Tibial artery (tissue), 4 donors: ENCODE measurements at regions of chr12 and their contacts with region 1.

Region 1: GRCh38 chr12:104641862-104642261 is 185.1 kb downstream of the CHST11 start:
- DNase-seq: no peak
- H3K4me3 ChIP-seq: no peak overlapping the region
- H3K27ac ChIP-seq: no peak overlapping the region
- H3K4me1 ChIP-seq: peaks cover 0 to 11% (median 0%) of the 10 kb centered on the region in 4 donors
- H3K27me3 ChIP-seq: no peaks in the 10 kb centered on the region
- CTCF ChIP-seq: no peak

Region 2: GRCh38 chr12:104560881-104561280 is 81.0 kb before region 1 on chr12:
- intact Hi-C with region 1: loop called (anchors 5 kb)
- DNase-seq: no peak
- H3K4me3 ChIP-seq: no peak overlapping the region
- H3K27ac ChIP-seq: no peak overlapping the region
- H3K4me1 ChIP-seq: peaks cover 0 to 4% (median 0%) of the 10 kb centered on the region in 4 donors
- H3K27me3 ChIP-seq: no peaks in the 10 kb centered on the region
- CTCF ChIP-seq: no peak

Region 3: DNA sequence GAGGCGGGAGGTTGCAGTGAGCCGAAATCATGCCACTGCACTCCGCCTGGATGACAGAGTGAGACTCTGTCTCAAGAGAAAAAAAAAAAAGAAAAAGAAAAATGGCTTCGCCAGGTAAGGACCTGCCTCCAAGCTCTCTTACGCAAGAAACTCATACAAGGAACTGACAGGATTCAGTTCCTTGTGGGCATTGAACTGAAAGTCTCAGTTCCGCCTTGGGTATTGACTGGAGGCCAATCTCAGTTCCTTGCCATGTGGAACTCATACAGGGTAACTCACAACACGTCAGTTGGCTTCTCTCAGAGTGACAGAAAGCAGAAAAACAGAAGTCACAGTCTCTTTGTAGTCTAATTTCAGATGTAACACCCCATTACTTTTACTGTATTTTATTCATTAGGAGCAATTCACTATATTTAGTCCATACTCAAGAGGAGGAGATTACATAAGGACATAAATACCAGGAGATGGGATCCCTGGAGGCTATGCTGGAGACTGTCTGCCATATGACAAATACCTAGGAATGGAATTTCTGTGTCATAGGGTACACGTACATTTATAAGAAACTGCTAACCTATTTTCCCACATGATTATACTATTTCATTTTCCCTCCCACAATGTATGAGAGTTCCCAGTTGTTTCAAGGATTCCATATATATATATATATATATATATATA is 332.9 kb after region 1 on chr12:
- intact Hi-C with region 1: no loop called
- DNase-seq: no peak
- H3K4me3 ChIP-seq: no peak overlapping the region
- H3K27ac ChIP-seq: no peak overlapping the region
- H3K4me1 ChIP-seq: peaks cover 0 to 3% (median 0%) of the 10 kb centered on the region in 4 donors
- H3K27me3 ChIP-seq: no peaks in the 10 kb centered on the region
- CTCF ChIP-seq: no peak

Region 4: GRCh38 chr12:105721051-105721825 is 1079.4 kb after region 1 on chr12:
- intact Hi-C with region 1: no loop called
- DNase-seq: no peak
- H3K4me3 ChIP-seq: no peak overlapping the region
- H3K27ac ChIP-seq: no peak overlapping the region
- H3K4me1 ChIP-seq: peaks cover 0 to 11% (median 0%) of the 10 kb centered on the region in 4 donors
- H3K27me3 ChIP-seq: no peaks in the 10 kb centered on the region
- CTCF ChIP-seq: no peak